Head of caudate nucleus (tissue), 42 donors: ENCODE measurements at regions of chr1 and their contacts with region 1.

Region 1: GRCh38 chr1:229003233-229004031 is 267.5 kb upstream of the RAB4A start:
- DNase-seq: peak; percentile 81 to 97 (median 93)

Region 2: DNA sequence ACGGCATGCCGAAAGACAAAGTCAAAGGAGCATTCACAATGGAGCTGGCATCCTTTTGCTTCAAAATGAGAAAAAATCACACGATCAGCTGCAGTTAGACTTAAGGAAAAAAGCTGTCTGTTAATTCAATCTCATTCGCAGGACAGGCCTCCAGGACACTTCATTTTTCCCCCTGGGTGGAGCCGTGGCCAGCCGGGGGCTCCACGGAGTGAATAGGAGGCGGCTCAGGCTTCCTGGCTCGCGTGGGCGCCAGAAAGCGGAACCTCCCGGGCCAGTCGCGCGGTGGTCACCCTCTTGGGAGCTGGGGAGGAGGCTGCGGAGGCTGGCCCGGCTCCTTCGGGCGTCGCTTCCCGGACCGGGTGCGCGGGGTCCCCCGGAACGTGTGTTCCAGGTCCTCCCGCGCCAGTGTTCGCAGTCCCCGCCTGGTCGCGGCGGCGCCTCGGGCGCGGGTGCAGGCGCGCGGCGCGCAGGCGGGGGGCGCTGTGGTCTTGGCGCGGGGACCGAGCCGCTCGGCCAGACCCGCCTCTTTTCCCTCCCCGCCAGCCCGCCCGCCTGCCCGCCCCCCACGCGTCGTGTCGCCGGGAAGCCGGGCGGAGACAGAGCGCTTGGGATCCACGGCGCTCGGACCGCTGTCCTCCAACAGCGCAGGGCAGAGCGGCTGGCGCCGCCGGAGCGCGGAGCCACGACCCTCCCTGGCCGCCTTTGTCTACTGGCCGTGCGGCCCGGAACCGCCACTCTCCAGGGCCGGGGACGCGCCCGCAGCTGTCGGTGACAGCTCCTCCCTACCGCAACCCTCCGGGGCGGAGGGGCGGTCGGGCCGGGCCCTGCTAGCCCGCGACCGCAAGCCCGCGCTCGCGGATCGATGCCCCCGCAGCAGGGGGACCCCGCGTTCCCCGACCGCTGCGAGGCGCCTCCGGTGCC is 268.3 kb before region 1 on chr1 and contains the start of gene RHOU:
- intact Hi-C with region 1: loop called (anchors 10 kb)
- DNase-seq: peak; percentile 40 to 93 (median 86)

Region 3: DNA sequence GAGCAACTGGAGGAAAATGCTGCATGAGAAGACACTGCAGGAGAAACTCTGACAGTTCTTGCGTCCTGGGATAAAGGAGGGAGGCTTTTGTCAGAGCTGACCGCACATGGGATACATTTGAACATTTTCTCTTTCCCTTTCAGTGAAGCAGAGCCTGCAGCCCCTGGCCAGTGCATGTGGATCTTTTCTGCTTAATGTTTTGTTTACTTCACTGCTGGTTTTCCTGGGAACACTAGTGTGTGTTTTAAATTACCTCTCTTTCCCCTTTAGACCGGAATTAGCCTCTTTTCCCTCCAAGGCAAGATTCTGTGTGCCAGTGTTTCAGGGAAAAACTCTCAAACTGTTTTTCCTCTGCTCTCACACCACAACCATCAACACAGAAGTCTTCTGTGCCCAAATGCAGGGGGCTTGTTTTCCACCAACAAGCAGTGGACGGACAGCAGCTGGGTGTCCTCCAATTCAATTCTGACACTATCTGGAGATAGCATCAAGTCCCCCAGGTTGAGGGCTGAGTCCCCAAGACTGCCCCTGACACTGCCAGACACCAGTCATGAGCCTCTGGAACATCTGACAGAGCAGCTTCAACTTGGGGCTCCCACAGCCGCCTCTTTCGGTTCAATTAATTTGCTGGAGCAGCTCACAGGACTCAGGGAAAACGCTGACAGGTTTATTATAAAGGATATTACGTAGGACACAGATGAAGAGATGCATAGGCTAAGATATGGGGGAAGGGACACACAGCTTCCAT is 131.9 kb before region 1 on chr1:
- intact Hi-C with region 1: loop called (anchors 10 kb)
- DNase-seq: peak in 14 of 42 donors; percentile 21 to 63 (median 40)

Region 4: GRCh38 chr1:229227298-229227919 is 224.0 kb after region 1 on chr1:
- intact Hi-C with region 1: loop called (anchors 5 kb)
- DNase-seq: peak; percentile 78 to 97 (median 92)